K562 (cell line): ENCODE measurements at regions of chr21 and their contacts with region 1.

Region 1: DNA sequence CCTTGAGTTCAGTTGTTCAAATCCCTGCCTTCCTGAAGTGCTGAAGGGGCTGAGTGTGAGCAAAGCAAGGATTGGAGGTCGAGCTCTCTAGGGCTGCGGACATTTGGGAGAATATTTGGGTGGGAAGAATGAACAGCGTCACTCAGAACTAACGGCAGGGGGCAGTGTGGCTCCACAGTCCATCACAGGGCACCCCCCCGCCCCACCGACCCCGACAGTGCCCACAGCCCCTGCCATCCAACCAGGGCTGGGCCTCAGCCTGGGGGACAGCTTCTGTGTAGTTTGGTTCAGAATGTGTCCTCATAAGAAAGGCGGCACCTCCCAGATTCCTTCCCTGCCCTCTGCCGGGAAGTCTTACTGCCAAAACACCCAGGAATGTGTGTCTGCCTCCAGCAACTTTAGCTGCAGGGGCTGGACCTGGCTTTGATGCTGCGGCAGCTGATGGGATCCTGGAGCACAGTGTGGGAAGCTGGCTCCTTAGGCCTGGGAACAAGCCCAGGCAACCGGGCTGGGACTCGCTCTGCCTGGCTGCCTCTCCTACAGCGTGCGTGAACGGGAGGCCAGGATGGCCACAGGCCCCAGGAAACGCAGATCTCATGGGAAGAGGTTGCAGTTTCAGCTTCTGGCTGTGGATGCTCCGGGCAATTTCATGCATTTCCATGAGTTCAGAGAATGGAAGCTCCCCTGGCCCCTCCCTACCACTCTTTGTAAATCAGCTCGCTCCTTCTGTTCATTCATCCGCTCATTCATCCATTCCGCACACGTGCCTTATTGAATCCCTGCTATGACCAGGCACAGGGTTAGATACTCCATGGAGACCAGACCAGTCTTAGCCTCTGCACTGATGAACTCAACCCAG is 104.9 kb upstream of the TMPRSS2 start:
- DNase-seq: peak; percentile 52 to 76 (median 74)
- ATAC-seq: peak; percentile 90
- H3K4me3 ChIP-seq: no peak overlapping the region
- H3K27ac ChIP-seq: no peak overlapping the region
- H3K4me1 ChIP-seq: no peaks in the 10 kb centered on the region
- H3K27me3 ChIP-seq: peaks cover 17 to 55% of the 10 kb centered on the region in 2 experiments
- CTCF ChIP-seq: peak; percentile 64 to 79 (median 71)
- EP300 ChIP-seq: no peak
- POLR2A ChIP-seq: no peak
- RAD21 ChIP-seq: peak; percentile 45 to 74

Region 2: GRCh38 chr21:41283211-41283818 is 329.6 kb before region 1 on chr21:
- CTCF ChIA-PET with region 1: no interaction called
- POLR2A ChIA-PET with region 1: no interaction called
- in situ Hi-C with region 1: no loop called
- intact Hi-C with region 1: loop called (anchors 10 kb)
- DNase-seq: peak; percentile 56 to 68 (median 64)
- ATAC-seq: peak; percentile 98
- H3K4me3 ChIP-seq: no peak overlapping the region
- H3K27ac ChIP-seq: no peak overlapping the region
- H3K4me1 ChIP-seq: no peaks in the 10 kb centered on the region
- H3K27me3 ChIP-seq: peaks cover 3 to 15% of the 10 kb centered on the region in 2 experiments; a peak in 3 of 5 replicates
- CTCF ChIP-seq: peak; percentile 68 to 85 (median 77)
- EP300 ChIP-seq: no peak
- POLR2A ChIP-seq: no peak
- RAD21 ChIP-seq: peak; percentile 80 to 88

Region 3: DNA sequence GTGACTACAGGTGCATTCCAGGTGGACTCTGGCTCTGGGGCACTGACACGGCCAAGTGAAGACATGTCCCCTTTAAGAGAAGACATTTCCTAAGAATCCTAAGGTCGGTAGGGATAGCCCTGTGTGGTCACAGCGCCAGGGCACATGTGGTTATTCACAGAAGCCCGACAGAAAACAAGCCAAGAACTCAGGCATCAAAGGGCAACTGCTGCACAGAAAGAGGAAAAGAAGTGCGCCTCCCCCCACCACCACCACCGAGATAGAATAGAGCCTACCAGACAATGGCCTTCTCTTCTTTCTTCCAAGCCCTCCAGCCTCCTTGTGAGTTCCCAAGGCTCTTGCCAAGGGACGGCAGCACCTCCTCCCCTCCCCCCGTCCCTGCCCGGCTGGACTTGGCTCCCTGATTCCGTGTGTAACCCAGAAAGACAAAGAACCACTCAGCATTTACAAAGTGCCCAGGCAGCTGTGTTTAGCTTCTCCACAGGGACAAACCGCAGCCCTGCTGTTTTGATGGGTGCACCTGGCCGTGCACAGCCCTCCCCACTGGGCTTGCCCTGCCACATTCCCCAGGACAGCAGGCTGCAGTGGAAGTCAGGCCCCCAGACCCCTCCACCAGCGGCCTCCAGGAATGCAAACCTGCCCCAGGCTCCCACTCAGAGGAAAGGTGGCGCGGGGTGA is 135.1 kb before region 1 on chr21:
- CTCF ChIA-PET with region 1: no interaction called
- POLR2A ChIA-PET with region 1: no interaction called
- in situ Hi-C with region 1: no loop called
- intact Hi-C with region 1: no loop called
- DNase-seq: no peak
- ATAC-seq: no peak
- H3K4me3 ChIP-seq: no peak overlapping the region
- H3K27ac ChIP-seq: no peak overlapping the region
- H3K4me1 ChIP-seq: no peaks in the 10 kb centered on the region
- H3K27me3 ChIP-seq: peaks cover 12 to 34% of the 10 kb centered on the region in 2 experiments; a peak in 4 of 5 replicates
- CTCF ChIP-seq: no peak
- EP300 ChIP-seq: no peak
- POLR2A ChIP-seq: no peak
- RAD21 ChIP-seq: no peak

Region 4: GRCh38 chr21:41622831-41623548 is 10.1 kb after region 1 on chr21:
- CTCF ChIA-PET with region 1: no interaction called
- POLR2A ChIA-PET with region 1: no interaction called
- in situ Hi-C with region 1: no loop called
- intact Hi-C with region 1: no loop called
- DNase-seq: no peak
- ATAC-seq: no peak
- H3K4me3 ChIP-seq: no peak overlapping the region
- H3K27ac ChIP-seq: no peak overlapping the region
- H3K4me1 ChIP-seq: no peaks in the 10 kb centered on the region
- H3K27me3 ChIP-seq: peaks cover 28 to 57% of the 10 kb centered on the region in 2 experiments
- CTCF ChIP-seq: no peak
- EP300 ChIP-seq: no peak
- POLR2A ChIP-seq: no peak
- RAD21 ChIP-seq: no peak

Region 5: GRCh38 chr21:41777951-41778874 is 165.3 kb after region 1 on chr21:
- CTCF ChIA-PET with region 1: interaction called, 19 read pairs
- POLR2A ChIA-PET with region 1: no interaction called
- in situ Hi-C with region 1: loop called (anchors 5 kb)
- intact Hi-C with region 1: loop called (anchors 2 kb)
- DNase-seq: peak; percentile 63 to 73 (median 66)
- ATAC-seq: peak; percentile 91
- H3K4me3 ChIP-seq: no peak overlapping the region
- H3K27ac ChIP-seq: no peak overlapping the region
- H3K4me1 ChIP-seq: peaks cover under 1 to 11% of the 10 kb centered on the region in 2 experiments; a peak in 4 of 5 replicates
- H3K27me3 ChIP-seq: peaks cover 36 to 38% of the 10 kb centered on the region in 2 experiments
- CTCF ChIP-seq: peak; percentile 74 to 79 (median 76)
- EP300 ChIP-seq: no peak
- POLR2A ChIP-seq: no peak
- RAD21 ChIP-seq: peak; percentile 34 to 77

Region 6: GRCh38 chr21:41783441-41784161 is 170.7 kb after region 1 on chr21:
- CTCF ChIA-PET with region 1: interaction called, 19 read pairs
- POLR2A ChIA-PET with region 1: no interaction called
- in situ Hi-C with region 1: loop called (anchors 5 kb)
- intact Hi-C with region 1: loop called (anchors 2 kb)
- DNase-seq: peak in 2 of 4 experiments; percentile 38 to 80
- ATAC-seq: peak; percentile 86
- H3K4me3 ChIP-seq: no peak overlapping the region
- H3K27ac ChIP-seq: no peak overlapping the region
- H3K4me1 ChIP-seq: peaks cover 6 to 12% of the 10 kb centered on the region in 2 experiments; a peak in 4 of 5 replicates
- H3K27me3 ChIP-seq: peaks cover 18 to 26% of the 10 kb centered on the region in 2 experiments; a peak in 4 of 5 replicates
- CTCF ChIP-seq: no peak
- EP300 ChIP-seq: peak; percentile 25; the same call in 1 of the 2 replicates
- POLR2A ChIP-seq: no peak
- RAD21 ChIP-seq: no peak

Region 7: DNA sequence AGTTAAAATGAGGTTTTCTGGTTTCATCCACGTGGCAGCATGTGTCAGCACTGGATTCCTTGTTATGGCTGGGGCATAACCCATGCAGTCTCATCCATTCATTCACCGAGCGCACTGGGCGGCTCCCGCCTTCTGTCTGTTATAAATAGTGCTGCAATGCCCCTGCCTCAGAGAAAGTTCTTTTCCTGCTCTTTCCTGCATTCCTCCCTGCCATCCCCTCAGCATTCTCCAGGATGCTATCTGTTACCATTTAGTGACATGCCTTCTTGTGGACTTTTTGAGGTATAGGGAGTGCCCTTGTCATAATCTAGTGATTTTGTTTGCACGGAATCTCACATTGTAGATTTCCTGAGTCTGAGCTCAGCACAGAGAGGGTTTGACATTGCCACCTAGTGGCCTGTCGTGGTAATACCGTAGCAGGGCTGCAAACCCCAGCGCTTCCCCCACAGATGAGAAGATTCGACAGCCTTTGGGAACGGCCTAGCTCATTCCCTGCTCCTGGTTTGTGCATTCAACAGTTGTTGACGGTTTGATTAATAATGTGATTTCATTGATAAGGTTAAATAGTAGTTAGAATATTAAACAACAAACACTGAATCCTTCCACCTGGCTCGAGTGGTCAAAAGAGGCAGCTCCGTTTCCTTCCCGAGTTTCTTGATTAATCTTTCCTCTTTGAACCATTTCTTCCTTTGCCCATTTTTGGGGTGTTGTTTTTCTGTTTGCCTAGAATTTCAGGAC is 504.5 kb after region 1 on chr21:
- CTCF ChIA-PET with region 1: interaction called, 5 read pairs
- POLR2A ChIA-PET with region 1: no interaction called
- in situ Hi-C with region 1: loop called (anchors 10 kb)
- intact Hi-C with region 1: loop called (anchors 5 kb)
- DNase-seq: peak; percentile 79 to 88 (median 85)
- ATAC-seq: peak; percentile 94
- H3K4me3 ChIP-seq: no peak overlapping the region
- H3K27ac ChIP-seq: no peak overlapping the region
- H3K4me1 ChIP-seq: peaks cover 0 to 4% of the 10 kb centered on the region in 2 experiments; a peak in 2 of 5 replicates
- H3K27me3 ChIP-seq: peaks cover 27 to 71% of the 10 kb centered on the region in 2 experiments; a peak in 4 of 5 replicates
- CTCF ChIP-seq: peak; percentile 87 to 93 (median 93)
- EP300 ChIP-seq: no peak
- POLR2A ChIP-seq: no peak
- RAD21 ChIP-seq: peak; percentile 75 to 90